ENCODE measurements at regions of chr6 and their contacts with region 1.

Region 1: DNA sequence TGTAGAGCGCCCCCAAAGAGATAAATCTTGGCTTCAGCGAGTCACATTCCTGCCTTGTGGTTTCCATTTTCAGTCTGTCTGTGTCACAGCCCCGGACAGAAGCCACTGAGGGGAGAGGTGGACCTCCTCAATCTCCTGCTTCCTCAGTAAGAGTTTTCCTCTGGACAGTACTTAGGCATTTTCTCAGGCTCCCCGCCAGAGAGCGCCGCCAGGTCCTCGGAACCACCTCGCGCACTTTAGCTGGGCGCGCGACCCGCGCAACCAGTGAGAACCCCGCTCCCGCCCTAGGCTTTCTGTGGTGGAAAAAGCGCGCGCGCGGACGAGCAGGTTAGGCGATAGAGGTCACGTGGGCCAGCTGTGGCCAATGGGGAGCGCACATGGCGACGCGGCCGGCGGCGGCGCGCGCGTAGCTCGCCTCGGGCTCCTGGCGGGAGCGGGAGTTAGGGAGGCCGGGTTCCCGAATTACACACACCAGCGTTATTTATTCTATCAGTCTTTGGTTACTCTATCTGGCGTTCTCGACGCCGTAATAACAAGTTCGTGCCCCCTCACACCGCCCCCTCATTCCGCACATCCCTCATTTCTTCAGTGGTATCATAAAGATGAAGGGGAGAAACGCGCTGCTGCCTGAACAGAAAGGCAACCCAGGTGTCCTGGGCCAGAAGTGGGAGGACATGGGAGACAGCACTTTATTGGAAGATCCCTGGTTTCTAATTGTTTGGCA is 19.4 kb downstream of the PXT1 start:
- DNase-seq: peak; percentile 90 to 97
- ATAC-seq: peak; percentile 97
- H3K4me3 ChIP-seq: peak overlapping the region; percentile 50
- H3K27ac ChIP-seq: peak overlapping the region; percentile 72 to 90
- H3K4me1 ChIP-seq: peaks cover 15% of the 10 kb centered on the region
- CTCF ChIP-seq: peak; percentile 65
- EP300 ChIP-seq: no peak
- POLR2A ChIP-seq: peak; percentile 65
- RAD21 ChIP-seq: peak; percentile 65 to 75

Region 2: DNA sequence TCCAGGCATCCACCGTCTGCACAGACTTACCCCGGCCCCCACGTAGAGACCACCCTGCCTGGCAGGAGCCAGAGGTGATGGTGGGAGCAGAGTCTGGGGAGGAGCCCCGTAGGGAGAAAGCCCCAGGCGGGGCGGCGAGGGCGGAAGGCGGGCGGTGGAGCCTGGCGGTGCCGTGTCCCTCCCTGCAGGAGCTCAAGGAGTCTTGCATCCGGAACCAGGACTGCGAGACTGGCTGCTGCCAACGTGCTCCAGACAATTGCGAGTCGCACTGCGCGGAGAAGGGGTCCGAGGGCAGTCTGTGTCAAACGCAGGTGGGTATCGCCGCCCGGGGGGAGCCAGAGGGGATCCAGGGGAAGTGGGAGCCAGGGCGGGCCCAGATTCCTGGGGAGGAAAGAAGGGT is 636.5 kb before region 1 on chr6:
- CTCF ChIA-PET with region 1: no interaction called
- POLR2A ChIA-PET with region 1: no interaction called
- DNase-seq: no peak
- ATAC-seq: peak; percentile 19 to 52; a peak in 3 of 6 replicates
- H3K4me3 ChIP-seq: no peak overlapping the region
- H3K27ac ChIP-seq: no peak overlapping the region
- H3K4me1 ChIP-seq: no peaks in the 10 kb centered on the region; the same call in 2 of the 3 replicates
- CTCF ChIP-seq: no peak
- EP300 ChIP-seq: no peak
- POLR2A ChIP-seq: no peak
- RAD21 ChIP-seq: no peak

Region 3: DNA sequence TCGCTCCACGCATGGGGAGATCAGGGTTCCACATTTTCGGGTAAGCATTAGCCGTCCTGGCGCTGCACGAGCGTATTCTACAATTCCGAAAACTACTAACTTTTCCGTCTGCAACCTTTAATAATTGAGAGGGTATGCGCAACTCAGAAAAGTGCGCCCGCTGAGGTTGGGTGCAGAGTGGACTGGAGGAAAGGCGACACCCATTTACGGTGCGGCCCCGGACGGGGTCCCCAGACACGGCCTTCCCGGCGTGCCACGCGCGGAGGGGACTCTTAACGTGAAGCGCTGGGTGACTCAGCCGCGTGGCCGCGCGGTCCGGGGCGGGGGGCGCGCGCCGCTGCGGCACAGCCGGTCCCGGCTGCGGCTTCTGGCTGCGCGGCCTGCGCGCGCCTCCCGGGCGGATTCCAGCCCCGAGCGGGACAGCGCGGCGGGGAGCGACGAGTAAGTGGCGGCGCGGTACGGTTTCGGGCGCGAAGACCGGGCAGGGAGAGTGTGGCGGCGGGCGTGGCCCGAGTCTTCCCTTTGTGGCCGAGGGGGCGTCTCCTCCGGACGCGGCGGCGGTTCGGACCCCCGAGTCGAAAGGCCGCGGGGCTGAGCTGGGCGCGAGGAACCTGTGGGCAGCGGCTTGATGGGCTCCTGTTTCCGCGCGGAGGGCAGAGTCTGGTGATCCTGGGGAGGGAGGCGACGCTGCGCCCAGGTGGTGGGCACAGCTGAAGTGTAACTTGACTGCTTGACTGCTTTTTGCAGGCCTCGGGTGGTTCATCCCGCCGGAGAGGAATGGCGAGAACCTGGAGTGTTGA is 19.6 kb after region 1 on chr6 and contains the starts of genes KCTD20 and PXT1:
- CTCF ChIA-PET with region 1: interaction called, 11 read pairs
- POLR2A ChIA-PET with region 1: interaction called, 13 read pairs
- DNase-seq: peak; percentile 75 to 86
- ATAC-seq: peak; percentile 76 to 79
- H3K4me3 ChIP-seq: peak within 1 kb of the TSS; percentile 84
- H3K27ac ChIP-seq: peak within 1 kb of the TSS; percentile 93 to 99
- H3K4me1 ChIP-seq: peaks cover 49% of the 10 kb centered on the region
- CTCF ChIP-seq: no peak
- EP300 ChIP-seq: no peak
- POLR2A ChIP-seq: peak; percentile 31
- RAD21 ChIP-seq: no peak
- polyA plus RNA-seq, gene KCTD20: 48.2 and 48.3 TPM in 2 replicates
- polyA plus RNA-seq, gene PXT1: not detected in 2 replicates